AG04450 (cell line): ENCODE measurements at regions of chr5 and their contacts with region 1.

Region 1: DNA sequence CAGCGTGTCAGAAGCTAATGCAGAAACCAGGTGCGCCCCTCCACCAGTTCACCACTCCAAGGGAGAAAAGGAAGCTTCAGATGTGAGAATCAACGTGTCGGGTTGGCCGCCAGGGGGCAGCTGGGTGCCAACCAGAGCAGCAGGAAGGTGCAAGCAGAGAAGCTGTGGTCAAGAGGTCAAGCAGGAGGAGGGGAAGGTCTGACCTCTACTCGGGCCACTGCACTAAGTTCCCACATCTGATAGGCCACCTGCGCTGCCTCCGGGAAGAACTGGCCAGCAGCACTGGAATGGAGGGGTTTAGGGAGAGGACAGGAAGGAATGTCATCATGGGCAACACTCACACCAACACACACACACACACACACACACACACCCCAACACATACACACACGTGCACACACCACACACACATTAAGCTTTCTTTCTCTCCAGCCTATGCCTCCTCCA is 31.4 kb downstream of the ANXA6 start:
- DNase-seq: no peak
- H3K4me3 ChIP-seq: no peak overlapping the region
- H3K27ac ChIP-seq: no peak overlapping the region
- H3K27me3 ChIP-seq: no peaks in the 10 kb centered on the region
- CTCF ChIP-seq: peak; percentile 69

Region 2: DNA sequence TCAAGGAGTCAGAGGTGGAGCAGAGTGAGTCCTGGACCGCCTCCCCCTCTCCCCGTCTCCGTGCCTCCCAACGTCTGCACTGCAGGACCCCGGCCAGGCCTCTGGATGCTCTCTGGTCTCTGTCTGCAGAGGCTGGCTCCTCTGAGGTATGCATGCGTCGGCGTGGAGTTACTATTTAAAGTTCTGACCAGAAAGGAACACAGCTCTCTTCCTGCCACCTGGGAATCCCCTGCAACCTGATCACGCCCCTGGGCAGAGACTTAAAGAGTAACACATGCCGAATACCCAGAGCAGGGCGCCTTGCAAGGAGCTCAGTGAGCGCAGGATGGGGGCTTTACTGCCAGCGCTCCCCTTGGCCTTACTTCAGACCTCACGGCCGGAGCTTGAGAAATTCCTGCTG is 15.3 kb after region 1 on chr5:
- CTCF ChIA-PET with region 1: interaction called, 30 read pairs
- POLR2A ChIA-PET with region 1: no interaction called
- DNase-seq: no peak
- H3K4me3 ChIP-seq: no peak overlapping the region
- H3K27ac ChIP-seq: peak overlapping the region; percentile 39
- H3K27me3 ChIP-seq: no peaks in the 10 kb centered on the region
- CTCF ChIP-seq: no peak

Region 3: GRCh38 chr5:151150471-151151262 is 24.4 kb after region 1 on chr5:
- CTCF ChIA-PET with region 1: interaction called, 25 read pairs
- POLR2A ChIA-PET with region 1: no interaction called
- DNase-seq: no peak
- H3K4me3 ChIP-seq: no peak overlapping the region
- H3K27ac ChIP-seq: peak overlapping the region; percentile 73
- H3K27me3 ChIP-seq: no peaks in the 10 kb centered on the region
- CTCF ChIP-seq: no peak

Region 4: DNA sequence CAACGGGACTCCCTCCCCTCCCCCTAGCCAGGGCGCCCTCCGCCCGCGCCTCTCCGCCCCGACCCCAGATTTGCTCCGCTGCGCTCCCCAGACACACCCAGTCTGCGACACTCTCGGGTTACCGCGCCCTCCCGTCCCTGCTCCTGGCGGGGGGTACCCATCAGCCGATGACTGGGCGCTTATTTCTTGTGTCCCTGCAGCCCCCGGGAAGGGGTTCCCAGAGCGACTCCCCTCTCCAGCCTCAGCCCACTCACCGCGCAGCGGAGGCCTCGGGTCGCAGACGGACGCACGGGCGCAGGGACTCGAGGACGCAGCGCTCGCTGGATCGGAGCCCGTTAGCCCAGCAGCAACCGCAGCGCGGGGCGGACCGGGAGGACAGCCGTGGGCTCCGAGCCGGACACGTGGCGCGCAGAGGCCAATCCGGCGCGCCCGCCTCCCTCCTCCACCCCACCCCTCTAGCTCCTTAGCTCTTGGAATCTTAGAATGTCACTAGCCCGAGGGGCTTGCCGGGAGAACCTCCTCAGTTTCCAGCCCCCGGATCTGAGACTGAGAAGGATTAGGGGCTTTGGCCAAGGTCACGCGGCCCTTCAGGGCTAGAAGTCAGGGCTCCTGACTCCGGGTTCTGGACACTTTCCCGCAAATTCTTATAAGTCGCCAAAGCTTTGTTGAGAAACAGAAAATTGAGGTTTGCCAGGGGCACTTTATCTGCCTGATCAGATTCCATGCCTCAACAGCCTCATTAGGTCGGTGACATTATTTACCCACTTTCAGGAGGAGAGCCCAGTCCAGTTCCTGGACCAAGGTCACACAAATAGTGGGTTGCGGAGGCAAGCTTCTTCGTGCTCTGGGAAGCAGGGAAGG is 31.4 kb after region 1 on chr5 and contains the start of gene ANXA6:
- CTCF ChIA-PET with region 1: interaction called, 159 read pairs
- POLR2A ChIA-PET with region 1: no interaction called
- DNase-seq: peak; percentile 49
- H3K4me3 ChIP-seq: peak within 1 kb of the TSS; percentile 95
- H3K27ac ChIP-seq: peak within 1 kb of the TSS; percentile 72
- H3K27me3 ChIP-seq: no peaks in the 10 kb centered on the region
- CTCF ChIP-seq: no peak
- polyA plus RNA-seq, gene ANXA6: 502 and 538 TPM in 2 replicates

Region 5: DNA sequence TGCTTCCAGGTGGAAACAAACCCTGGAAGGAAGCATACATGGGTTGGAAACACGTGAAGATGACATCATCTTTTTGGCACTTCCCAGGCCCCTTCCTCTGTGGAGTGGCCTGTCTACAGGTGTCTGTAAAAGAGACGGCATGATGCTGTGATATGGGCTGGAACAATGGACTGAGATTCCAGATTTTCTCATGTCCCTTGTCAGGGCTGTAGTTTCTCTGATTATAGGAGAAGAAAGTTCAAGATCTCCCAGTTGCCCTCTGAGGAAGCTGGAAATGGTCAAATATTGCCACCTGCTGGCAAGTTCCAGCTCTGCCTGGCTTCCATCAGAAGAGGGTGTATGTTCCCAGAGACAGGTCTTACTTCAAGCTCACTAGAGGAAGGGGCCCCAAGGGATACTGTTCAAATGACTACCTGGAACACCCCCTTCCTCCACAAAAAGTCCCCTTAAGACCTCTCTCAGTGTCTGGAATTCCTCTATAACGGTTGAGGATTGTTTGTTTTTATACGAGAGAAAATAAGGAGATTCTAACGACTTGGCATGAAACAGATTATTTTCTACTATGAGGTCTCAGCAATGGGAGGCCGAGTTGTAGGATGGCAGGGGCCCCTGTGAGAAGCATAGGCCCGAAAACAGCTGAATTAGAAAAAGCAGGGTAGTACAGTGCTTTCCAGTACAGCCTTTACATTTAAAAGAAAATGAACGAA is 38.6 kb after region 1 on chr5:
- CTCF ChIA-PET with region 1: interaction called, 159 read pairs
- POLR2A ChIA-PET with region 1: interaction called, 5 read pairs
- DNase-seq: peak; percentile 56
- H3K4me3 ChIP-seq: no peak overlapping the region
- H3K27ac ChIP-seq: no peak overlapping the region
- H3K27me3 ChIP-seq: peaks cover 2% of the 10 kb centered on the region
- CTCF ChIP-seq: peak; percentile 93

Region 6: GRCh38 chr5:151171529-151171928 is 45.3 kb after region 1 on chr5:
- CTCF ChIA-PET with region 1: interaction called, 159 read pairs
- POLR2A ChIA-PET with region 1: no interaction called
- DNase-seq: no peak
- H3K4me3 ChIP-seq: no peak overlapping the region
- H3K27ac ChIP-seq: no peak overlapping the region
- H3K27me3 ChIP-seq: peaks cover 4% of the 10 kb centered on the region
- CTCF ChIP-seq: no peak

Region 7: GRCh38 chr5:151239237-151239861 is 113.1 kb after region 1 on chr5:
- CTCF ChIA-PET with region 1: interaction called, 28 read pairs
- POLR2A ChIA-PET with region 1: no interaction called
- DNase-seq: no peak
- H3K4me3 ChIP-seq: no peak overlapping the region
- H3K27ac ChIP-seq: no peak overlapping the region
- H3K27me3 ChIP-seq: peaks cover 17% of the 10 kb centered on the region
- CTCF ChIP-seq: peak; percentile 77